ENCODE measurements at regions of chr17 and their contacts with region 1.

Region 1: DNA sequence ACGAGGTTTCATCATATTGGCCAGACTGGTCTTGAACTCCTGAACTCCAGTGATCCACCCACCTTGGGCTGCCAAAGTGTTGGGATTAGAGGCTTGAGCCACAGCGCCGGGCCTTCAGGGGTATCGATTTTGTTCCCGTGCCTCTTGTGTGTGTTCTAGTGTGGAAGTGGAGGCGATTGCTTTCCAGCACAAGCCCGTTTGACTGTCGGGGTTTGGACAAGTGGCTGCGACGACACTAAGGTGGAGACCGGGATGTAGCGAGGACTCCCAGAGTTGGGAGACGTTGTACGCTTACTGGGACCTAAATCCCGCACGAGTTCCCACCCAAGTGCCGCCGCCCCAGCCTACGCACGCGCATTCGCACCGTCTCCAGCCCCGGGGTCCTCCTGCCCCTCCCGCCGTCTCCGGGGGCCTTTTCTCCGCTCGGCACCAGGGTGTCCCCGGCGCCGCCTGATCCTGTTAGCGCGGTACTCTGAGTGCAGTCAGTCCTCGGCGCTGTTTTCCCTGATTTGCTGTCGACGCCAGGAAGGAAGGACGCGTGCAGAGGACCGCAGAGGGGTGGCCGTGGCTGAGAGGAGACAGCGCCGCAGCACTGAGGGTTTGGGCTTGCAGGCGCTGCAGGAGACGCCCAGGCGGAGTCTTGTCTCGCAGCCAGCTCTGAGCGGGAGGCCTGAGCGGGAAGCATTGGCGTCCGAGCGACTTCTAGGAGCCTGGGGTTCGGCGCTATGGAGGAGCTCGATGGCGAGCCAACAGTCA is at the start of gene NUP85:
- DNase-seq: peak; percentile 82 to 98 (median 92)
- ATAC-seq: peak; percentile 85 to 87
- H3K4me3 Mint-ChIP-seq: peak within 1 kb of the TSS; percentile 92 to 97 (median 96)
- H3K27ac Mint-ChIP-seq: peak within 1 kb of the TSS; percentile 98 to 100 (median 99)
- H3K4me1 Mint-ChIP-seq: peaks cover 11 to 40% (median 34%) of the 10 kb centered on the region in 4 donors
- H3K27me3 Mint-ChIP-seq: no peaks in the 10 kb centered on the region
- polyA plus RNA-seq, gene NUP85: 17.3 to 39.4 (median 21.4) TPM

Region 2: GRCh38 chr17:75138519-75138918 is 66.7 kb before region 1 on chr17:
- POLR2A ChIA-PET with region 1: no interaction called
- DNase-seq: no peak
- ATAC-seq: no peak
- H3K4me3 Mint-ChIP-seq: no peak overlapping the region
- H3K27ac Mint-ChIP-seq: peak overlapping the region in 1 of 10 donors; percentile 15
- H3K4me1 Mint-ChIP-seq: peaks cover 2 to 24% (median 13%) of the 10 kb centered on the region in 4 donors
- H3K27me3 Mint-ChIP-seq: no peaks in the 10 kb centered on the region

Region 3: GRCh38 chr17:75182569-75183450 is 22.4 kb before region 1 on chr17 and contains the start of gene SUMO2:
- POLR2A ChIA-PET with region 1: interaction called, 16 read pairs
- DNase-seq: peak; percentile 91 to 96 (median 94)
- ATAC-seq: peak; percentile 80 to 84
- H3K4me3 Mint-ChIP-seq: peak within 1 kb of the TSS; percentile 88 to 97 (median 92)
- H3K27ac Mint-ChIP-seq: peak within 1 kb of the TSS; percentile 89 to 99 (median 98)
- H3K4me1 Mint-ChIP-seq: peaks cover 15 to 53% (median 39%) of the 10 kb centered on the region in 4 donors
- H3K27me3 Mint-ChIP-seq: no peaks in the 10 kb centered on the region
- polyA plus RNA-seq, gene SUMO2: 293 to 381 (median 325) TPM

Region 4: DNA sequence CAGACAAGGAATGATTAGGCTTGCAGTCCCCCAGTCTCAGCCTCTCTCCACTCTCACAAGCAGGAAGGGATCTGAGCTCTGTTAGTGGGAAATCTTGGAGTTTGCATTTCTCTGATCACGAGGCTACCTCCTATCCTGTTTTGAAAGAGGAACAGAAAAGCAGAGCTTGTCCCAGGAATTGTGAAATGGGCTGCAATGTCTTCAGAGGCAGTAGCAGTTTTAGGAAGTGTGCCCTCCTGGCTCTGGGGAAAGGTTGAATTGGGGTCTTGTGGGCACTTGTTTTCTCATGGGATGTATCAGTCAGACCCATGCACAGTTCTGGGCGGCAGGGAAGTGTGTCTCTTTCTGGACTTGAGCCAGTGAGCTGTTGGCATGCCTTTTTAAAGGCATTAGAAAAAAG is 23.1 kb after region 1 on chr17:
- POLR2A ChIA-PET with region 1: no interaction called
- DNase-seq: no peak
- ATAC-seq: no peak
- H3K4me3 Mint-ChIP-seq: no peak overlapping the region
- H3K27ac Mint-ChIP-seq: peak overlapping the region in 2 of 10 donors; percentile 36 to 66
- H3K4me1 Mint-ChIP-seq: peaks cover 0 to 3% (median 0%) of the 10 kb centered on the region in 4 donors
- H3K27me3 Mint-ChIP-seq: no peaks in the 10 kb centered on the region

Measured in naive thymus-derived CD8-positive, alpha-beta T cell (primary cell).